WTC11 (cell line): ENCODE measurements at regions of chr19 and their contacts with region 1.

Region 1: DNA sequence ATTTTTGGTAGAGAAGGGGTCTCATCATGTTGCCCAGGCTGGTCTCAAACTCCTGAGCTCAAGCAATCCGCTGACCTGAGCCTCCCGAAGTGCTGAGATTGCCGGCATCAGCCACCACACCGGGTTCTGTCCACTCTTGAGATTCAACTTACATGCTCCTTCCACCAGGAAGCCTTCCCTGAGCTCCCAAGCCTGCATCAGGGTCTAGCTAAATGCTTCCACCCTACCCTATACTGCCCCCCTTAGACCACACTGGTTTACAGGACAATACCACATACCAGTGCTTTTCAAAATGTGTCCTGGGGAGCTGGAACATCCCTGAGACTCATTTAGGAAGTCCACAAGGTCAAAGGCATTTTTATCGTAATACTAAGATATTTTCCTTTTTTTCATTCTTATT is 15.1 kb upstream of the CACNG8 start:
- DNase-seq: no peak
- ATAC-seq: peak; percentile 83
- H3K4me3 Mint-ChIP-seq: no peak overlapping the region
- H3K27ac Mint-ChIP-seq: no peak overlapping the region; the same call in 1 of the 2 replicates
- H3K4me1 Mint-ChIP-seq: peaks cover 42% of the 10 kb centered on the region
- H3K27me3 Mint-ChIP-seq: no peaks in the 10 kb centered on the region
- CTCF ChIP-seq: no peak

Region 2: GRCh38 chr19:53867225-53868090 is 80.2 kb before region 1 on chr19 and contains the start of gene MYADM:
- CTCF ChIA-PET with region 1: interaction called, 40 read pairs
- POLR2A ChIA-PET with region 1: interaction called, 25 read pairs
- DNase-seq: peak; percentile 100
- ATAC-seq: peak; percentile 71
- H3K4me3 Mint-ChIP-seq: peak within 1 kb of the TSS; percentile 93
- H3K27ac Mint-ChIP-seq: peak within 1 kb of the TSS; percentile 99
- H3K4me1 Mint-ChIP-seq: peaks cover 19% of the 10 kb centered on the region
- H3K27me3 Mint-ChIP-seq: peaks cover 5% of the 10 kb centered on the region
- CTCF ChIP-seq: no peak
- total RNA-seq, gene MYADM: 78.6 to 86.4 TPM (median 79.7 TPM) in 3 replicates

Region 3: DNA sequence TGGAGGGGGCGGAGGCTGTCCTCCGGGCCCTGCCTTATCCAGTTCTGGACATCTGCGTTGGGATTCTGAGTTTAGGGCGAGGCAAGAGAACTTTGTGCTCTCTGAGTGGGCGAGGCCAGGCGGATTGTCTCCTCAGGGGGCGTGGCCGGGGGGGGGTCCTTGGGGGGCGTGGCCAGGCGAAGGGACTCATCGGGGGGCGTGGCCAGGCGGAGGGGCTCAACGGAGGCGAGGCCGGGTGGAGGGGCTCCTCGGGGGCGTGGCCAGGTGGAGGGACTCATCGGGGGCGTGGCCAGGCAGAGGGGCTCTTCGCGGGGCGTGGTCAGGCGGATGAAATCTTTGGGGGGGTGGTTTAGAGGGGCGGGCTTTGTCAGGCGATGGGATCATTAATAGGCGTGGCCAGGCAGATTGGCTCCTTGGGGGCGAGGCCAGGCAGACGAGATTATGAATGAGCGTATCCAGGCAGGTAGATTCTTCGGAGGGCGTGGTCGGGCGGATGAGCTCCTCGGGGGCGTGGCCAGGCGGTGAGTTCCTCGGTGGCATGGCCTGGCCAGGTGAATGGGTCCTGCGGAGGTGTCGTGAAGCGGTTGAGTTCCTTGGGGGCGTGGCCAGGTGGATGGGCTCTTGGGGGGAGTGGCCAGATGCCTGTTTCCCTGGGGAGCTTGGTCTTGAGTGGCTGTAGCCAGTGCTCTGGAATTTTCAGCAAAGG is 48.8 kb before region 1 on chr19:
- CTCF ChIA-PET with region 1: interaction called, 39 read pairs
- POLR2A ChIA-PET with region 1: interaction called, 3 read pairs
- DNase-seq: peak; percentile 100
- ATAC-seq: peak; percentile 92
- H3K4me3 Mint-ChIP-seq: peak overlapping the region; percentile 81
- H3K27ac Mint-ChIP-seq: peak overlapping the region; percentile 100
- H3K4me1 Mint-ChIP-seq: peaks cover 33% of the 10 kb centered on the region
- H3K27me3 Mint-ChIP-seq: 0 out of 2 replicates have a peak, but pooled peaks cover 9% of the 10 kb centered on the region
- CTCF ChIP-seq: no peak

Region 4: GRCh38 chr19:53958168-53958571 is 10.5 kb after region 1 on chr19:
- CTCF ChIA-PET with region 1: interaction called, 38 read pairs
- POLR2A ChIA-PET with region 1: interaction called, 8 read pairs
- DNase-seq: peak; percentile 85
- ATAC-seq: peak; percentile 27
- H3K4me3 Mint-ChIP-seq: peak overlapping the region; percentile 79
- H3K27ac Mint-ChIP-seq: peak overlapping the region; percentile 77
- H3K4me1 Mint-ChIP-seq: peaks cover 49% of the 10 kb centered on the region
- H3K27me3 Mint-ChIP-seq: no peaks in the 10 kb centered on the region; the same call in 1 of the 2 replicates
- CTCF ChIP-seq: no peak

Region 5: GRCh38 chr19:53982611-53983010 is 35.0 kb after region 1 on chr19:
- CTCF ChIA-PET with region 1: interaction called, 39 read pairs
- POLR2A ChIA-PET with region 1: interaction called, 35 read pairs
- DNase-seq: peak; percentile 62
- ATAC-seq: no peak
- H3K4me3 Mint-ChIP-seq: no peak overlapping the region
- H3K27ac Mint-ChIP-seq: no peak overlapping the region
- H3K4me1 Mint-ChIP-seq: peaks cover 11% of the 10 kb centered on the region
- H3K27me3 Mint-ChIP-seq: peaks cover 4% of the 10 kb centered on the region; the same call in 1 of the 2 replicates
- CTCF ChIP-seq: no peak

Region 6: GRCh38 chr19:54077334-54077733 is 129.7 kb after region 1 on chr19:
- CTCF ChIA-PET with region 1: no interaction called
- POLR2A ChIA-PET with region 1: no interaction called
- DNase-seq: no peak
- ATAC-seq: no peak
- H3K4me3 Mint-ChIP-seq: no peak overlapping the region
- H3K27ac Mint-ChIP-seq: no peak overlapping the region
- H3K4me1 Mint-ChIP-seq: no peaks in the 10 kb centered on the region
- H3K27me3 Mint-ChIP-seq: peaks cover 5% of the 10 kb centered on the region
- CTCF ChIP-seq: no peak

Region 7: GRCh38 chr19:54203151-54203611 is 255.6 kb after region 1 on chr19:
- CTCF ChIA-PET with region 1: no interaction called
- POLR2A ChIA-PET with region 1: no interaction called
- DNase-seq: no peak
- ATAC-seq: no peak
- H3K4me3 Mint-ChIP-seq: peak overlapping the region; percentile 100
- H3K27ac Mint-ChIP-seq: peak overlapping the region; percentile 100
- H3K4me1 Mint-ChIP-seq: peaks cover 68% of the 10 kb centered on the region
- H3K27me3 Mint-ChIP-seq: no peaks in the 10 kb centered on the region
- CTCF ChIP-seq: no peak

Region 8: GRCh38 chr19:55391702-55392615 is 1444.3 kb after region 1 on chr19:
- CTCF ChIA-PET with region 1: no interaction called
- POLR2A ChIA-PET with region 1: no interaction called
- DNase-seq: no peak
- ATAC-seq: peak; percentile 9
- H3K4me3 Mint-ChIP-seq: peak overlapping the region; percentile 44
- H3K27ac Mint-ChIP-seq: peak overlapping the region; percentile 51
- H3K4me1 Mint-ChIP-seq: peaks cover 58% of the 10 kb centered on the region
- H3K27me3 Mint-ChIP-seq: peaks cover 5% of the 10 kb centered on the region; the same call in 1 of the 2 replicates
- CTCF ChIP-seq: no peak